Activated CD8-positive, alpha-beta T cell treated with anti-CD3 and anti-CD28 coated beads for 36 hours (primary cell): ENCODE measurements at regions of chr16 and their contacts with region 1.

Region 1: GRCh38 chr16:30698139-30698815 is 694 bp upstream of the SRCAP start:
- DNase-seq: peak; percentile 99
- ATAC-seq: peak; percentile 78
- H3K4me3 Mint-ChIP-seq: peak overlapping the region; percentile 91
- H3K27ac Mint-ChIP-seq: peak overlapping the region; percentile 100
- H3K4me1 Mint-ChIP-seq: peaks cover 39% of the 10 kb centered on the region
- H3K27me3 Mint-ChIP-seq: no peaks in the 10 kb centered on the region
- CTCF ChIP-seq: no peak

Region 2: DNA sequence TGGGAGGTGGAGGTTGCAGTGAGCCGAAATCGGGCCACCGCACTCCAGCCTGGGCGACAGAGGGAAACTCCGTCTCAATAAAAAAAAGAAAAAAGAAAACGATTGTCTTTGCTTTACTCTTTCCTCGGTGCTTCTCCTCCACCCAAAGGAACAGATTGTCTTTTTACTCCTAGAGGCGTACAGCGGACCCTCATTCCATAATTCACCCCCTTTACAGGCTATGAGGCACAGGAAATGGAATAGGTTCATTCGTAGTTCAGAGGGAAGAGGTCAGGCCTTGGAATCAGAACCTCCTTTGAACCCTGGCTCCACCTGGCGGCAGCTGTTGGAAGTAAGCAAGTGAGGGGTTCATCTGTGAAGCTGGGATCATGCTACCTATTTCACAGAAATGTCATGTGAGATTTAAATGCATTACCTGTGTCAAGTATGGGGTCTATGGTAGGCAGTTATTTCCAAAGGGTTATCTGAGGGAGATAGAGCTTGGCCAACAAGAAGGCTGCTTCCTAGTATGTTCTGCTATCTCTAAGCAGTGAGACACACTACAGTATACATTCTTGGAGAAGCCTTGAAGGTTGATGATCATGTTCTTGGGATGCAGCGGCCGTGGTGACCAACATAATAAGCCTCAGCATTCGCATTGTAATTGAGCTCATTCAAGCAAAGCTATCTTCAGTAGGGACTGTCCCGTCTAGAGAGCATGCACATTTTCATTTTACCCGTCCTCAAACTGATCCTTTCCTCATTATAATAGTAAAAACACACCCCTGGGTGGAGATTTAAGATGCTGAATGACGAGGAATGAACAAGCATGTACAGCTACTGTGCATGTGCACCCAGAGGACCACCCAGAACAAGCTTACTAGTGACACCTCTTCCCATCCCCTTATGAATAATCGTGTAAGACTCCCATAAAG is 69.4 kb before region 1 on chr16:
- CTCF ChIA-PET with region 1: interaction called, 26 read pairs
- POLR2A ChIA-PET with region 1: no interaction called
- intact Hi-C with region 1: no loop called
- DNase-seq: peak; percentile 95
- ATAC-seq: peak; percentile 97
- H3K4me3 Mint-ChIP-seq: peak overlapping the region; percentile 57
- H3K27ac Mint-ChIP-seq: peak overlapping the region; percentile 72
- H3K4me1 Mint-ChIP-seq: peaks cover 4% of the 10 kb centered on the region
- H3K27me3 Mint-ChIP-seq: no peaks in the 10 kb centered on the region
- CTCF ChIP-seq: peak; percentile 88

Region 3: DNA sequence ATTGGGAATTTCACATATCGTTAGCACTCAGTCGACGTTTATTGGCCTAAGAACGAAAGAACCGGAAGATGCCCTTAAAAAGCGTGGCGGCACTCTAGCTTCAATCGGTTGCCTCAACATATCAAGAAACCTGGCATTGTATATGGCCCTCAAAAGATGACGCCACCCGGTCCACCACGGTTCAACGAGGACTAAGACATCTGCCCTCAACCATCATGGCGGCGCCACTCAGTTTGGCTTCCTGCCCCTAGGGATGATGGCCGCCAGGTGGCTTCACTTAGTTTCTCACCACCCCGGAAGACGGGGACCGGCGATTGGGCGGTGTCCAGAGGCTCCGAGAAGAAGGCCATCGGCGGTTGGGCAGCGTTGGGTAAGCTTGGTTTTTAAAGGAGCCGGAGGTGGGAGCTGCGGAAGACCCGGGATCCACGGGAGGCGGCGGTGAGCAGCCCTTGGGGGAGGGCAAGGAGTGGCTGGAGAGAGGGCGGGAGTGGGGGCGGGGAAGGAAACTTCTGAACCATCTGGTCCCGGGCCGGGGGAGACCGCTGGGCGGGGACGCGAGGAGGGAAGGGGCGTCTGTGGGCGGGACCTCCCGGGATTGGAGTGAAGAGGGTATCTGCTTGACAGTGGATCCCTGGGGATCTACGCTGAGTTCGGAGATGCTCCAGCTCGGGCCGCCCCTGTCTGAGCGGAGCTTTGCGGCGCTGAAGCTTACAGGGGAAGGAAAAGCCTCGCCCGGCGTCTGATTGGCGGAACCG is 47.7 kb before region 1 on chr16 and contains the start of gene PRR14:
- CTCF ChIA-PET with region 1: interaction called, 14 read pairs
- POLR2A ChIA-PET with region 1: interaction called, 14 read pairs
- intact Hi-C with region 1: no loop called
- DNase-seq: peak; percentile 100
- ATAC-seq: peak; percentile 82
- H3K4me3 Mint-ChIP-seq: peak within 1 kb of the TSS; percentile 88
- H3K27ac Mint-ChIP-seq: peak within 1 kb of the TSS; percentile 91
- H3K4me1 Mint-ChIP-seq: peaks cover 27% of the 10 kb centered on the region
- H3K27me3 Mint-ChIP-seq: no peaks in the 10 kb centered on the region
- CTCF ChIP-seq: no peak
- total RNA-seq, gene PRR14: 74.0 to 76.6 TPM

Region 4: DNA sequence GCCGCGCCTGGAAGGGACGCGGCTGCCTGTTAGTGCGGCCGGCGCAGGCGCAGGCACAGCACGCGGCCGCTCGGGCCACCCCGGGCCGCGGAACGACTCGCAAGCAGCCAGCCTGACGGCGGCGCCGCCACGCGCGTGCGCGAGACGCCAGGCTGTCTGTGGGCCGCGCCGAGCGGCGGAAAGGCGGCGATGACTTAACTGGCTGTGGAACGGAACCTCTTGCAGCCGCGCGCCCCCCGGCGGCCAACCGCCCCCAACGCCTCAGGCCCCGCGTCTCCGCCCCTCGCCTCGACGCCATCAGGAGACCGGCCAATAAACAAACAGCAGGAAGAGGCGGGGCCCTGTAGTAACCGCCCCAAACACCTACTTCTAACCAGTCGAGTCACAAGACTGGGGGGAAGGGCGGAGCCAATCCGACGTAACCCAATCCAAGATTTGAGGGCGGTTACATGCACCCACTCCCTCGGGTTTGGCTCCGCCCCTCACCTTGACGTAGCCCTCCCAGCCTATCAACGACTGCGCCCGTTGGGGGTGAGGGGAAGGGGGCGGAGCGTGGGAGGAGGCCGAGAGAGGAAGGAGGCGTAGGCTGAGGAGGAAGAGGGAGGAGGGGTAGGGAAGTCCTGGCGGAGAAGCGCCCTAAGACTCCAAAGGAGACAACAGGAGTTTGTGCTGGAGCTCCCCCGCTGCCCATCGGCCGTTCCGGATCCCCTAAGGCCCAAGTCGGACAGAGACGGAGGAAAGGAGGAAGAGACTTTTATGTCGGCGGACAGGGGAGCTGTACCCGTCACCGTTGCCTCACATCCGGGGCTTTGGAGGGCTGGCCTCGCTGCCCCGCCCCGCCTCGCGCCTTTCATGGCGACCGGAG is 40.2 kb before region 1 on chr16 and contains the start of gene FBRS:
- CTCF ChIA-PET with region 1: interaction called, 67 read pairs
- POLR2A ChIA-PET with region 1: interaction called, 36 read pairs
- intact Hi-C with region 1: loop called (anchors 1 kb)
- DNase-seq: peak; percentile 100
- ATAC-seq: peak; percentile 79
- H3K4me3 Mint-ChIP-seq: peak within 1 kb of the TSS; percentile 97
- H3K27ac Mint-ChIP-seq: peak within 1 kb of the TSS; percentile 100
- H3K4me1 Mint-ChIP-seq: peaks cover 41% of the 10 kb centered on the region
- H3K27me3 Mint-ChIP-seq: no peaks in the 10 kb centered on the region
- CTCF ChIP-seq: peak; percentile 62
- total RNA-seq, gene FBRS: 80.3 to 85.8 TPM

Region 5: GRCh38 chr16:30922960-30923535 is 224.8 kb after region 1 on chr16:
- CTCF ChIA-PET with region 1: interaction called, 3 read pairs
- POLR2A ChIA-PET with region 1: no interaction called
- intact Hi-C with region 1: loop called (anchors 10 kb)
- DNase-seq: peak; percentile 98
- ATAC-seq: peak; percentile 74
- H3K4me3 Mint-ChIP-seq: peak overlapping the region; percentile 99
- H3K27ac Mint-ChIP-seq: peak overlapping the region; percentile 100
- H3K4me1 Mint-ChIP-seq: peaks cover 20% of the 10 kb centered on the region
- H3K27me3 Mint-ChIP-seq: no peaks in the 10 kb centered on the region
- CTCF ChIP-seq: no peak